PC-3 (cell line): ENCODE measurements at regions of chr1 and their contacts with region 1.

Region 1: DNA sequence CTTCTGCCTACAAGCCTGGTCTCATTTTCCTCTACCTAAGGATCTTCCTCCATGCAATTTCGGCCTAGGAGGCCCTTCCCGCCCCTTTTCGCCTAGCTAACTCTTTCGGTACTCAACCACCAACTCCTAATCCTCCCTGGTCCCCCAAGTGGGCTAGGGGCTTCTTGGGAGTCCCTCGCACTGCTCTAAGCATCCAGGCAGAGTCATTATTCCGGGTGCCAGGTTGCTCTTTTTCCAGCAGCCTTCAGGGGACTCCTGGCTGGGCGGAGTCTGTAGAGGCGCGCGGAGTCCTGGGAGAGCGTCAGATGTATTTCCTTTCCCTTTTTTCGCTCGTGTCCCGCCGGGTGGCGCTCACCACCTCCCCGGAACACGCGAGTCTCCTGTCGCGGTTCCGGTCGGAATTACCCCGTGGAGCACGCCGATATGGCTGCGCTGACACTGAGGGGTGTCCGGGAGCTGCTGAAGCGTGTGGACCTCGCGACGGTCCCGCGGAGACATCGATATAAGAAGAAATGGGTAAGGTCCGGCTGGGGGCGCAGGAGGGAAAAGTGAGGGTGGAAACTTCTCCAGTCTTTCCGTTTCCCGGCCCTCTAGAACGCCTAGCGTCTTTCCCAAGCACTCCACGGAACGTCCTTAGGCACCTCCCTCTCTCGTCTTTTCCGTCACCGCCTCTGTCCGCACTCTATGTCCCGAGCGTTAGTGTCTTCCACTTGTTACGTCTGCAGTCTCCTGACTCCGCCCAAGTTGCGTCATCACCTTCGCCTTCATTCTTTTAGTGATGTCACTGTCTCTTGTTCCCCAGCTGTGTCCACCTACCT is at the start of gene NSUN4:
- DNase-seq: peak; percentile 91
- ATAC-seq: peak; percentile 95
- H3K4me3 ChIP-seq: peak within 1 kb of the TSS; percentile 88
- H3K27ac ChIP-seq: peak within 1 kb of the TSS; percentile 78
- H3K4me1 ChIP-seq: peaks cover 14% of the 10 kb centered on the region
- H3K27me3 ChIP-seq: no peaks in the 10 kb centered on the region
- CTCF ChIP-seq: peak; percentile 84
- total RNA-seq, gene NSUN4: 14.2 and 16.8 TPM in 2 replicates

Region 2: GRCh38 chr1:46303038-46303871 is 37.4 kb before region 1 on chr1 and contains the starts of genes LRRC41 and UQCRH:
- CTCF ChIA-PET with region 1: interaction called, 7 read pairs
- POLR2A ChIA-PET with region 1: interaction called, 5 read pairs
- intact Hi-C with region 1: loop called (anchors 1 kb)
- DNase-seq: peak; percentile 95
- ATAC-seq: peak; percentile 61
- H3K4me3 ChIP-seq: peak within 1 kb of the TSS; percentile 99
- H3K27ac ChIP-seq: peak within 1 kb of the TSS; percentile 76
- H3K4me1 ChIP-seq: peaks cover 28% of the 10 kb centered on the region
- H3K27me3 ChIP-seq: no peaks in the 10 kb centered on the region
- CTCF ChIP-seq: no peak
- total RNA-seq, gene LRRC41: 52.7 TPM in 2 replicates
- total RNA-seq, gene UQCRH: 642 and 885 TPM in 2 replicates

Region 3: DNA sequence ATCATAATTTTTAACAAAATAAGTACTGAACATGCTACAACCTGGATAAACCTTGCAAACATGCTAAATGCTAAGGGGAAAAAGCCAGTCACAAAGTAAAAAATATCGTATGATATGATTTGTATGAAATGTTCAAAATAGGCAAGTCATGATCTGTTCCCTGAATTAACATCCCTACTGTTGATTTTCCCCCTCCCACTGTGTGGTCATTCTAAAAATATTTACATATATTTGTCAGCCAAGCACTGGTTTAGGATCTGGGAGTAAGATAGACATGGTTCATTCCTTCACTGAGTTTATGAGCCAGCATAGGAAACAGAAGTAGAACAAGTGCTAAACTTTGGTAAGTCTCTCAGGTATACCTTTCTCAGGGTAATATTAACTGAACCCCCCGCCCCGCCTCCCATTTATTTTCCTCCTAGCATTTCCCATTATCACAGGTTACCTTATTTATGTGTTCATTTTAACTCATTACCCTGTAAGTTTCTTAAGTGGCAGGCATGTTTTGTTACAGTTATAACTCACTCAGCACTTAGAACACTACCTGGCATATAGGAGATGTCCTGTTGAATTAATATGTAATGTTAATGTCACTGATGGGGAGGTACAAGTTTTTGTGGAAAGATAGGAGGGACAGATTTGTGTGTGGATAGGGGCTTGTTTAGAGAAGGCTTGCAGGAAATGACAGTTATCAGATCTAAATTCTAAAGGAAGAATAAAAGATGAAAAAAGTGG is 24.8 kb before region 1 on chr1:
- CTCF ChIA-PET with region 1: no interaction called
- POLR2A ChIA-PET with region 1: interaction called, 19 read pairs
- intact Hi-C with region 1: no loop called
- DNase-seq: peak; percentile 63
- ATAC-seq: peak; percentile 92
- H3K4me3 ChIP-seq: no peak overlapping the region
- H3K27ac ChIP-seq: no peak overlapping the region
- H3K4me1 ChIP-seq: peaks cover 6% of the 10 kb centered on the region; the same call in 1 of the 2 replicates
- H3K27me3 ChIP-seq: no peaks in the 10 kb centered on the region
- CTCF ChIP-seq: no peak

Region 4: DNA sequence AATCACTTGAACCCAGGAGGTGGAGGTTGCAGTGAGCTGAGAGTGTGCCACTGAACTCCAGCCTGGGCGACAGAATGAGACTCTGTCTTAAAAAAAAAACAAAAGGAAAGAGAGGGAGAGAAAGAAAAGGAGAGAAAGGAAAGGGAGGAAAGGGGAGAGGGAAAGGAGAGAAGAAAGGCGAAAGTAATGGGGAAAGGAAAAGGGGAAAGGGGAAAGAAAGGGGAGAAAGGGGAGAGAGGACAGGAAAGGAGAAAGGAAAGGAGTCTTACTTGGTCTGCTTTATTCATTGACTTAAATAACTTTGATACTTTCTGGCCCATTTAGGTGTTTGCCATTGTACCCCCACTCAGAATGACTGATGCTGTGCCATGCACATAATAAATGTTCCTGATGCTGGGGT is 11.8 kb after region 1 on chr1:
- CTCF ChIA-PET with region 1: no interaction called
- POLR2A ChIA-PET with region 1: no interaction called
- intact Hi-C with region 1: no loop called
- DNase-seq: no peak
- ATAC-seq: no peak
- H3K4me3 ChIP-seq: no peak overlapping the region
- H3K27ac ChIP-seq: no peak overlapping the region
- H3K4me1 ChIP-seq: 0 out of 2 replicates have a peak, but pooled peaks cover 5% of the 10 kb centered on the region
- H3K27me3 ChIP-seq: no peaks in the 10 kb centered on the region
- CTCF ChIP-seq: no peak